ENCODE measurements at regions of chr4 and their contacts with region 1.

Region 1: DNA sequence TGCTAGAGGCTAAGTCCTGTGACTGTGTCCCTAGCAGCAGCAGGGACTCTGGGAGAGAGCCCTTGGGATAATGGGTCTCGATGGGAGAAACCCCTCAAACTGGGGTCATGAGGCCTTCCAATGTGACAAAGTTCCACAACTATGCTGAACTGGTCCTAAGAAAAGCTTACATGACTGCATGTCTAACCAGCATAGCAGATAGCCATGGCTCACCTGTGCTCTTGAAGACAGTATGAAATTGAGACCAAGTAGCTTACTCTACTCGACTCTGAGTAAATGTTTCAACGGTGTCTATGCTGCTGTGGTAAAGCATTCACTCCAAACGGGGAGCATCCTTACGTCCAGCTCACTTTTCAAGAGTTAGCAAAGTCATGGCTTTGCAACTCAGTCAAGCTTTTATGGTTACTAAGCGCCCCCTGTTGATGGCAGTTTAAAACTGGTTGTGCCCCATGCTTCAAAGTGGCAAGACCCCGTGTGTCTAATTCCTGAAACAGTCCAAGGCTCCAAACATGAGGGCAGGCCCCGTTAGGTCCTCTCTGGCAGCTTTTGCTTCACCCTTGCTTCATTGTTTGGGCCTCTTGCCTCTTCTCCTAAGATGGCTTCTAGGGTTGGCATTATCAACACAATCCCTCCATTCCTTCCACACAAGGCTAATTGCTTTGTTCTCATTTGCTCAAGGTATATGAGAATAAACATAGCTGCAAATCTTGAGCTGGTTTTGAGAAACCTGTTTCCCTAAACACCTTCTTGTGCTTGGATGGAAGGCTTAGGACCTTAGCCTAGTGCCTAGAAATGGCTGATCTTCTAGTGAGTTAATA is 46.6 kb downstream of the CCNG2 start:
- DNase-seq: peak; percentile 85
- H3K4me3 Mint-ChIP-seq: no peak overlapping the region
- H3K27ac Mint-ChIP-seq: no peak overlapping the region
- H3K4me1 Mint-ChIP-seq: peaks cover 25% of the 10 kb centered on the region
- H3K27me3 Mint-ChIP-seq: no peaks in the 10 kb centered on the region
- CTCF ChIP-seq: peak; percentile 87

Region 2: DNA sequence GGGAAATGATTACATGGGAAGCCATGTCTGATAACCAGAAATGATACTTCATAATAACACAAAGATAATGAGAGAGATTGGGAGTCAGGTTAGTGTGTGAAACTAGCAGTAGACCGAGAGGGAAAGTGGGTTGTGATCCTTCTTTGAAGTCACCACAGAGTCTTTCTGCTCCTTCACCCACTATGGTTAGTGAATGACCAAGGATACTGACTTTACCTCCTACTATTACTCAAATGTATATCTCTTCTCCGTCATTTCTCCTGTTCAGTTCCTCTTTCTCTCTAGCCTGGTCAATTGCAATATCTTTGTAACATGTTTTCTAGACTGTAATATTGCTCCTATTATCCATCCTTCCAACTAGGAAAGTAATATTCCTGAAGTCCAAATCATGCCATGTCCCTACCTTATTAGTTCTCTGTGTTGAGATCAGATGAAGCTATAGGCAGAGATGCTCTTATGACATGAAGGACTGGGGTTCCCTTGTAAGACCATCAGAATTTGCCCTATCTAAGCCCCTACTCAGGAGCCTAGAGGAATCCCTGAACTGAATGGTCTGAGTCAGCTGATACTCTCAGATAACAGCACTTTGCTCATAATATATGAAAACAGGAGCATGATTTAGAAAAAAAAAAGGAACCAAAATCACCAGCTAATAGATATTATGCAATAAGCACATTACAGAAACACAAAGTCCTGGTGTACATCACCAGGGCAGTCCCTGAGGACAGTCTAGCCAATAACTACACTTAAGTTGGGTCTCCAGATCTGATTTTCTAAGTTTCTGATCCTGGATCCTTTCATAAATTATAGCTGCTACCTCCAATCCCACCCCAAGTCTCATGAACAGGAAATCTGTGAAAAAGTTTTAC is 687.4 kb before region 1 on chr4:
- CTCF ChIA-PET with region 1: no interaction called
- POLR2A ChIA-PET with region 1: no interaction called
- intact Hi-C with region 1: loop called (anchors 5 kb)
- DNase-seq: no peak
- H3K4me3 Mint-ChIP-seq: no peak overlapping the region
- H3K27ac Mint-ChIP-seq: no peak overlapping the region
- H3K4me1 Mint-ChIP-seq: peaks cover 4% of the 10 kb centered on the region
- H3K27me3 Mint-ChIP-seq: no peaks in the 10 kb centered on the region
- CTCF ChIP-seq: no peak

Region 3: GRCh38 chr4:77044461-77045150 is 159.0 kb before region 1 on chr4:
- CTCF ChIA-PET with region 1: interaction called, 61 read pairs
- POLR2A ChIA-PET with region 1: interaction called, 6 read pairs
- intact Hi-C with region 1: loop called (anchors 1 kb)
- DNase-seq: peak; percentile 47
- H3K4me3 Mint-ChIP-seq: peak overlapping the region; percentile 30
- H3K27ac Mint-ChIP-seq: peak overlapping the region; percentile 82
- H3K4me1 Mint-ChIP-seq: peaks cover 20% of the 10 kb centered on the region
- H3K27me3 Mint-ChIP-seq: no peaks in the 10 kb centered on the region
- CTCF ChIP-seq: peak; percentile 44

Region 4: GRCh38 chr4:77065382-77065781 is 138.2 kb before region 1 on chr4:
- CTCF ChIA-PET with region 1: interaction called, 12 read pairs
- POLR2A ChIA-PET with region 1: no interaction called
- intact Hi-C with region 1: no loop called
- DNase-seq: no peak
- H3K4me3 Mint-ChIP-seq: no peak overlapping the region
- H3K27ac Mint-ChIP-seq: no peak overlapping the region
- H3K4me1 Mint-ChIP-seq: peaks cover 28% of the 10 kb centered on the region
- H3K27me3 Mint-ChIP-seq: no peaks in the 10 kb centered on the region
- CTCF ChIP-seq: no peak

Region 5: GRCh38 chr4:77095101-77095821 is 108.3 kb before region 1 on chr4:
- CTCF ChIA-PET with region 1: interaction called, 102 read pairs
- POLR2A ChIA-PET with region 1: interaction called, 4 read pairs
- intact Hi-C with region 1: loop called (anchors 1 kb)
- DNase-seq: peak; percentile 70
- H3K4me3 Mint-ChIP-seq: no peak overlapping the region
- H3K27ac Mint-ChIP-seq: peak overlapping the region; percentile 16
- H3K4me1 Mint-ChIP-seq: peaks cover 24% of the 10 kb centered on the region
- H3K27me3 Mint-ChIP-seq: no peaks in the 10 kb centered on the region
- CTCF ChIP-seq: peak; percentile 58

Region 6: GRCh38 chr4:77110730-77111129 is 92.9 kb before region 1 on chr4:
- CTCF ChIA-PET with region 1: interaction called, 16 read pairs
- POLR2A ChIA-PET with region 1: no interaction called
- intact Hi-C with region 1: no loop called
- DNase-seq: peak; percentile 55
- H3K4me3 Mint-ChIP-seq: no peak overlapping the region
- H3K27ac Mint-ChIP-seq: no peak overlapping the region
- H3K4me1 Mint-ChIP-seq: peaks cover 10% of the 10 kb centered on the region
- H3K27me3 Mint-ChIP-seq: no peaks in the 10 kb centered on the region
- CTCF ChIP-seq: no peak

Region 7: GRCh38 chr4:77177199-77177598 is 26.4 kb before region 1 on chr4:
- CTCF ChIA-PET with region 1: interaction called, 11 read pairs
- POLR2A ChIA-PET with region 1: interaction called, 4 read pairs
- intact Hi-C with region 1: no loop called
- DNase-seq: no peak
- H3K4me3 Mint-ChIP-seq: no peak overlapping the region
- H3K27ac Mint-ChIP-seq: no peak overlapping the region
- H3K4me1 Mint-ChIP-seq: peaks cover 11% of the 10 kb centered on the region
- H3K27me3 Mint-ChIP-seq: no peaks in the 10 kb centered on the region
- CTCF ChIP-seq: no peak

Region 8: DNA sequence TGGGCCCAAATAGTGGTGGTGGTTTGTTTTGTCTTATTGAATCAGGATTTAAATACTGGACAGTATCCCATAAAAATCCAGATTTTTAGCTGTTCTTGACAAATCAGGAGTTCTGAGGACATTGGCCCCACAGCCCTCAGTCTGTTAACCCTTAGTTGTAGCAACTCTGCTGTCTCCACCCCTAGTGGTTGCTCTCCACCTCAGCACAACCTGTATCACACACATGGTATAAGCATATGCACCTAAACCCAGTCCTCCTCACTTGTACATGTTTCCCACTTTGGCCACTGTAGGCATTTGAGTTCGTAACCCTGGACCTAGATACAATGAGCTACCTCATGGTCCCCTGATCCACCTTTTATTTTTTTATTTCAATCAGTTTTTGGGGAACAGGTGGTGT is 735.0 kb after region 1 on chr4:
- CTCF ChIA-PET with region 1: no interaction called
- POLR2A ChIA-PET with region 1: no interaction called
- intact Hi-C with region 1: no loop called
- DNase-seq: no peak
- H3K4me3 Mint-ChIP-seq: no peak overlapping the region
- H3K27ac Mint-ChIP-seq: no peak overlapping the region
- H3K4me1 Mint-ChIP-seq: no peaks in the 10 kb centered on the region
- H3K27me3 Mint-ChIP-seq: no peaks in the 10 kb centered on the region
- CTCF ChIP-seq: no peak